Posterior cingulate gyrus (tissue), 11 donors: ENCODE measurements at regions of chr13 and their contacts with region 1.

Region 1: GRCh38 chr13:106357198-106357597 is 178.3 kb downstream of the EFNB2 start:
- DNase-seq: no peak

Region 2: DNA sequence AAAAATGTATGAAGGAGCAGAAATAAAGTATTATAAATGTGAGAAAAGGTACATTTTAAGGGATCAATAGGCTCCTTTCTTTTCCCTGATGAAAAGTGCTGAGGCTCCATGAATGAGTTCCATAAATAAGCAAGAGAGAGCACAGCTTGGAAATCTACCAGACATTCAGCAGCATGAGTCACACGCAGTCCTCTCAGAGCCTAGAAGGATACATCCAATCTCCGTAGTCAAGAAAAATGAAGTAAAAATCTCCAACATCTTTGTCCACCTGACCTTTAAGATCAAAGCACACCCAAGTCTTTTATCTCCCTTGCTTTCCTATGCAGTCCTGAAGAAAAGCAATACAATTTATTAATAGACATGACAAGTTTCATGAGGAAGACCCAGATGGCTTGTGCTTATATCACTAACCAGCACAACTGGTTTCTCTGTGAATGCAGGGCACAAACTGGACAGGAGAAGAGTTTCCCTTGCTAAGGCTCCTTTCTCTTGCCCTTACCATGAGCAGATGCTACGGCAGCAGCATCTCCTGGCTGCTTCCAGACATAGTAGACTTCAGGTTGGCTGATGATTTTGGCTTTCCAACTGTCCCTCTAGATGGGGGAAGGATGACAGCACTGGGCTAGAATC is 552.5 kb before region 1 on chr13:
- intact Hi-C with region 1: no loop called
- DNase-seq: peak in 2 of 10 donors; percentile 12 to 15

Region 3: GRCh38 chr13:106493533-106494220 is 136.5 kb after region 1 on chr13:
- intact Hi-C with region 1: loop called (anchors 10 kb)
- DNase-seq: peak in 1 of 10 donors; percentile 79